ENCODE measurements at regions of chr3 and their contacts with region 1.

Region 1: GRCh38 chr3:152405915-152406802 is 137.4 kb downstream of the MBNL1 start:
- DNase-seq: no peak
- H3K4me3 ChIP-seq: no peak overlapping the region
- H3K4me3 Mint-ChIP-seq: peak overlapping the region in 4 of 8 donors; percentile 23 to 41 (median 30)
- H3K27ac ChIP-seq: no peak overlapping the region
- H3K27ac Mint-ChIP-seq: peak overlapping the region; percentile 21 to 89 (median 78)
- H3K4me1 ChIP-seq: peaks cover 82% of the 10 kb centered on the region
- H3K4me1 Mint-ChIP-seq: peaks cover 52 to 82% (median 71%) of the 10 kb centered on the region in 4 donors
- H3K27me3 ChIP-seq: no peaks in the 10 kb centered on the region
- H3K27me3 Mint-ChIP-seq: no peaks in the 10 kb centered on the region

Region 2: GRCh38 chr3:152390647-152391046 is 15.5 kb before region 1 on chr3:
- CTCF ChIA-PET with region 1: interaction called, 7 read pairs
- POLR2A ChIA-PET with region 1: interaction called, 3 read pairs
- intact Hi-C with region 1: loop called (anchors 1 kb)
- DNase-seq: no peak
- H3K4me3 ChIP-seq: no peak overlapping the region
- H3K4me3 Mint-ChIP-seq: peak overlapping the region in 1 of 8 donors; percentile 35
- H3K27ac ChIP-seq: no peak overlapping the region
- H3K27ac Mint-ChIP-seq: peak overlapping the region; percentile 0 to 83 (median 58)
- H3K4me1 ChIP-seq: peaks cover 71% of the 10 kb centered on the region
- H3K4me1 Mint-ChIP-seq: peaks cover 43 to 87% (median 64%) of the 10 kb centered on the region in 4 donors
- H3K27me3 ChIP-seq: no peaks in the 10 kb centered on the region
- H3K27me3 Mint-ChIP-seq: no peaks in the 10 kb centered on the region

Region 3: GRCh38 chr3:152416808-152417580 is 10.8 kb after region 1 on chr3:
- CTCF ChIA-PET with region 1: interaction called, 4 read pairs
- POLR2A ChIA-PET with region 1: interaction called, 5 read pairs
- intact Hi-C with region 1: loop called (anchors 1 kb)
- DNase-seq: no peak
- H3K4me3 ChIP-seq: no peak overlapping the region
- H3K4me3 Mint-ChIP-seq: peak overlapping the region in 1 of 8 donors; percentile 21
- H3K27ac ChIP-seq: peak overlapping the region; percentile 2
- H3K27ac Mint-ChIP-seq: peak overlapping the region in 6 of 7 donors; percentile 23 to 59 (median 36)
- H3K4me1 ChIP-seq: peaks cover 62% of the 10 kb centered on the region
- H3K4me1 Mint-ChIP-seq: peaks cover 39 to 80% (median 62%) of the 10 kb centered on the region in 4 donors
- H3K27me3 ChIP-seq: no peaks in the 10 kb centered on the region
- H3K27me3 Mint-ChIP-seq: no peaks in the 10 kb centered on the region

Region 4: DNA sequence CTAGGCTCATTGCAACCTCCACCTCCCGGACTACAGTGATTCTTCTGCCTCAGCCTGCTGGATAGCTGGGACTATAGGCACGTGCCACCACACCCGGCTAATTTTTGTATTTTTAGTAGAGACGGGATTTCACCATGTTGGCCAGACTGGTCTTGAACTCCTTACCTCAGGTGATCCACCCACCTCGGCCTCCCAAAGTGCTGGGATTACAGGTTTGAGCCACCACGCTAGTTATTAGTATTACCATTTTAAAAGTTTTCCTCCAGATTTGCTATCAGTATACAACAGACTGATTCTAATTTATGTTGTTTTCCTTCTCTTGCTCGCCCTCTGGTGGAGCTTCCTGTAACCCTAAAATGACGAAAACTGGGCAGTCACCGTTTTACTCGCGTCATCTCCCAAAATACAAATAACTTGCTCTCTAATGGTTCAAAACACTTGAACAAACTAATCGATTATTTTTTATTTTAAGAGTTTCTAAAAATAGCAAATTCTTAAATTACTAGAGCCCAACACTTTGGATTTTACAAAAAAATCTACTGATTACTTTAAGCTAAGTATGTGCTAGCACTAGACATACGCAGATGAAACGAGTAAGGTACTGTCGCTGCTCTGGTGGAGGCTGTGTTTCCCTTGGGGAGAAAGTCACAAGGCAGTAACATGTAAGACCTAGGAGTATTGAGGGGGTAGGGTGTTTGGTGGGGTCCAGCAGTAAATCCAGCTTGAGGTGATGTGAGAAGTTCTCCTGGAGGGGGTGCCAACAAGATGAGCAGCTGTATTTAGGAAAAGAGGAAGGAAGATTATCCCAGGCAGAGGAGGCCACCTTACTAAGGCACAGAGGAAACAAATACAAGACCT is 65.9 kb after region 1 on chr3:
- CTCF ChIA-PET with region 1: no interaction called
- POLR2A ChIA-PET with region 1: no interaction called
- intact Hi-C with region 1: no loop called
- DNase-seq: peak; percentile 65 to 74 (median 70)
- H3K4me3 ChIP-seq: no peak overlapping the region
- H3K4me3 Mint-ChIP-seq: peak overlapping the region; percentile 35 to 81 (median 65)
- H3K27ac ChIP-seq: peak overlapping the region; percentile 36
- H3K27ac Mint-ChIP-seq: peak overlapping the region; percentile 18 to 93 (median 85)
- H3K4me1 ChIP-seq: peaks cover 11% of the 10 kb centered on the region
- H3K4me1 Mint-ChIP-seq: peaks cover 13 to 19% (median 13%) of the 10 kb centered on the region in 4 donors
- H3K27me3 ChIP-seq: no peaks in the 10 kb centered on the region
- H3K27me3 Mint-ChIP-seq: no peaks in the 10 kb centered on the region

Region 5: GRCh38 chr3:152595975-152596790 is 190.0 kb after region 1 on chr3:
- CTCF ChIA-PET with region 1: no interaction called
- POLR2A ChIA-PET with region 1: no interaction called
- intact Hi-C with region 1: no loop called
- DNase-seq: peak in 2 of 5 donors; percentile 0 to 6
- H3K4me3 ChIP-seq: no peak overlapping the region
- H3K4me3 Mint-ChIP-seq: peak overlapping the region in 4 of 8 donors; percentile 7 to 62 (median 46)
- H3K27ac ChIP-seq: no peak overlapping the region
- H3K27ac Mint-ChIP-seq: peak overlapping the region in 4 of 7 donors; percentile 3 to 72 (median 26)
- H3K4me1 ChIP-seq: peaks cover 8% of the 10 kb centered on the region
- H3K4me1 Mint-ChIP-seq: peaks cover 4 to 11% (median 9%) of the 10 kb centered on the region in 4 donors
- H3K27me3 ChIP-seq: no peaks in the 10 kb centered on the region
- H3K27me3 Mint-ChIP-seq: peaks cover 0 to 11% of the 10 kb centered on the region in 2 donors